ENCODE measurements at regions of chr7 and their contacts with region 1.

Region 1: GRCh38 chr7:149317986-149318672 is 56.1 kb downstream of the ZNF783 start:
- DNase-seq: peak; percentile 78
- ATAC-seq: peak; percentile 93
- H3K4me3 Mint-ChIP-seq: no peak overlapping the region
- H3K27ac Mint-ChIP-seq: no peak overlapping the region
- H3K4me1 Mint-ChIP-seq: peaks cover 36% of the 10 kb centered on the region
- H3K27me3 Mint-ChIP-seq: no peaks in the 10 kb centered on the region; the same call in 1 of the 2 replicates
- CTCF ChIP-seq: peak; percentile 29

Region 2: DNA sequence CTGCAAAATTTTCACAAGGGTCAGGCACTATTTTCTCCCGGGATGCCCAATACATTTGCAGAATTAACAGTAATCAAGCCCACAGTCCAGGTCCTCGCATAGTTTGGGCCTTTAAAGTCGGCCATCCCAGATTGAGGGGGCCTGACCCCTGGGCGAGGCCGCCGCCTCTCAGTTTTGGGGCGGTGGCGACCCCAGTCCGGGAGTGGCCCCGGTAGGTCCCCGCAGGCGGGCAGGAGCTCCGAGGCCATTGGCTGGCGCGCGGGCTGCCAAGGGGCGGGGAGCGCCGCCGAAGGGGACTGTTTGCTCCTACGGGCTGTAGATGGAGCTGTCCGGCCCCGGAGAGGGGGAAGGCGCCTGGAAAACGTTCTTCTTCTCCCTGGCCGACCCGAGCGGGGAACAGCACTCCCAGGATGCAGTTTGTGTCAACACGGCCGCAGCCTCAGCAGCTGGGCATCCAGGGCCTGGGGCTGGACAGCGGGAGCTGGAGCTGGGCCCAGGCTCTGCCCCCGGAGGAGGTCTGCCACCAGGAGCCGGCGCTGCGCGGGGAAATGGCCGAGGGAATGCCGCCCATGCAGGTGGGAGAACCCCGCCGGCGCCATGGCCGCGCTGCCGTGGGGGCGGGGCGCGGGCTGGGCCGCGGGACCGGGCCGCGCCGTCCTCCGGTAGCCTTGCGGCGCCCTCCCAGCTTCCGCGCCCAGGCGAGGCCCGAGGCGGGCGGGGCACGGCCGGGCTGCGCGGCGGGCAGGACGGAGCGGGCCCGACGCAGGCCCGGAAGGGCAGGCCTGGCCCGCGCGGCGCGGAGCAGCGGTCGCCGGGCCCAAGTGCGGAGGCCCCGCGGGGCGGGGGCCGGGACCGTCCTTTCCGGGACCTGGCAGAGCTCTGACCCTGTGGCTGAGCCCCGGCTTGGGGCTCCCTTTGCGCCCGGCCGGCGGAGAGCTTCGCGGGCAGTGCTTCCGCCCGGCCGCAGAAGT is 122.7 kb before region 1 on chr7 and contains the start of gene ZNF282:
- CTCF ChIA-PET with region 1: interaction called, 10 read pairs
- POLR2A ChIA-PET with region 1: no interaction called
- DNase-seq: peak; percentile 95
- ATAC-seq: peak; percentile 96
- H3K4me3 Mint-ChIP-seq: peak within 1 kb of the TSS; percentile 88
- H3K27ac Mint-ChIP-seq: peak within 1 kb of the TSS; percentile 87
- H3K4me1 Mint-ChIP-seq: peaks cover 13% of the 10 kb centered on the region
- H3K27me3 Mint-ChIP-seq: no peaks in the 10 kb centered on the region
- CTCF ChIP-seq: no peak
- total RNA-seq, gene ZNF282: 34.8 to 39.3 TPM (median 38.5 TPM) in 3 replicates

Region 3: GRCh38 chr7:149284850-149285626 is 33.1 kb before region 1 on chr7:
- CTCF ChIA-PET with region 1: interaction called, 35 read pairs
- POLR2A ChIA-PET with region 1: interaction called, 3 read pairs
- DNase-seq: peak; percentile 99
- ATAC-seq: peak; percentile 96
- H3K4me3 Mint-ChIP-seq: peak overlapping the region; percentile 98
- H3K27ac Mint-ChIP-seq: peak overlapping the region; percentile 70; the same call in 1 of the 2 replicates
- H3K4me1 Mint-ChIP-seq: peaks cover 17% of the 10 kb centered on the region
- H3K27me3 Mint-ChIP-seq: peaks cover 27% of the 10 kb centered on the region
- CTCF ChIP-seq: no peak

Region 4: DNA sequence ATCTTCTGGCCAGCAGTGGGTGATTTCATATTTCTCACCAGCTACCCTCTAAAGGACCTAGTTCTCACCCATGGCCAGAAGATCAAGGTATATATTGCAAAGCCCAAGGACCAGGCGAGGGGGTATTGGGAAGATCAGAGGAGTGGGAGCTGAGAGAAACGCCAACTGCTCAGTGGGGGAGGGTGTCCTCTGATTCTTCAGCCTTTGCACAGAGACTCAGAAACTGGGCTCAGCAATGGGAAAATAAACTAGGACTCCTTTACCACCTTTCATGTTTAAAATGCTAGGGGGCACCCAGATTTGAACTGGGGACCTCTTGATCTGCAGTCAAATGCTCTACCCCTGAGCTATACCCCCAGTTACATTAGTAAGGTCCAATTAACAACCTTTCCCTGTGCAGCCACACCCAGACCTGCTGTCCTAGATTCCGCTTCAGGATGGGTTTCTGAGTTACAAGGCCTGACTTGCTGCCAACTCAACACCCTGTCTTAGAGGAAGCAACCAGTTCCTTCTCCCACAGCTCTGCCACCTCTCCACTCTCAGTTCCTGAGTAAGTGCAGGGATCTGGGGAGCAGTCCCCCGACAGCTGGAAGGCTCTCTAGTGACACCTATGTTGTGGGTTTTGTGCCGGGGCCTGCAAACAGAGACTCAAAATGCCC is 37.4 kb after region 1 on chr7:
- CTCF ChIA-PET with region 1: interaction called, 23 read pairs
- POLR2A ChIA-PET with region 1: no interaction called
- DNase-seq: peak; percentile 79
- ATAC-seq: peak; percentile 96
- H3K4me3 Mint-ChIP-seq: peak overlapping the region; percentile 72
- H3K27ac Mint-ChIP-seq: peak overlapping the region; percentile 91
- H3K4me1 Mint-ChIP-seq: peaks cover 15% of the 10 kb centered on the region
- H3K27me3 Mint-ChIP-seq: peaks cover 3% of the 10 kb centered on the region
- CTCF ChIP-seq: no peak

Region 5: GRCh38 chr7:149409895-149410294 is 91.8 kb after region 1 on chr7:
- CTCF ChIA-PET with region 1: interaction called, 24 read pairs
- POLR2A ChIA-PET with region 1: no interaction called
- DNase-seq: no peak
- ATAC-seq: no peak
- H3K4me3 Mint-ChIP-seq: no peak overlapping the region
- H3K27ac Mint-ChIP-seq: no peak overlapping the region
- H3K4me1 Mint-ChIP-seq: peaks cover 8% of the 10 kb centered on the region
- H3K27me3 Mint-ChIP-seq: peaks cover 15% of the 10 kb centered on the region
- CTCF ChIP-seq: no peak